Aorta (tissue), 5 donors: ENCODE measurements at regions of chr4 and their contacts with region 1.

Region 1: DNA sequence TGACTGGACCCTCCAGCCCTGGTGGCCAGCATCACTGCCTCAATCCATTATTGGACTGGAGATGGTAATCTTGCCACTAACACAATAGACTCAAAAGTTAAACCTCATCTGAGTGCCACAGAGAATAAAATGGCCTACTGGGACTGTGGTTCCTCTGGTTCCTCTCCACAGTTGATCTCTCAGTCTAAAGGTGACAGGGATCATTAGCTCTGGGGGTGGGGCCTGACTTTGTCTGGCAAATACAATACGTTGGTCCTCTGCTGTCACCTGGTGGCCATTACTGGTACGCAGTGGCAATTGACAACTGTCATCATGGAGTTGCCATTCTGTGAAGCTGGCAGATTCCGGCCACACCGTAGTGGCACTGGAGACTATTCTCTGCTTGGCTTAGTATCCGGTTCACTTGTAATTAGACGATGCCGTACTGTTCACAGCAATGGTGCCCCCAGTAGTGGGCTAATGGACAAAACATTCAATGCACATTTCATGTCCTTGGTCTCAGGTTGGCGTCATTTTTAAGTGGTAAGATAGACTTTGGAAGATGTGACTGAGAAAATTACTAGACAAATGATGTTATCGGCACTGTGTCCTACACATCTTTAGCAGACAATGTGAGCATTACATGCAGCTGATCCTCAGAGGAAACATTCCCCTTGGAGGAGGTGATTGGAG is 6.7 kb downstream of the FGFBP2 start:
- DNase-seq: peak; percentile 79 to 89
- ATAC-seq: peak; percentile 83
- H3K4me3 ChIP-seq: no peak overlapping the region
- H3K27ac ChIP-seq: no peak overlapping the region
- H3K4me1 ChIP-seq: no peaks in the 10 kb centered on the region
- H3K27me3 ChIP-seq: no peaks in the 10 kb centered on the region

Region 2: DNA sequence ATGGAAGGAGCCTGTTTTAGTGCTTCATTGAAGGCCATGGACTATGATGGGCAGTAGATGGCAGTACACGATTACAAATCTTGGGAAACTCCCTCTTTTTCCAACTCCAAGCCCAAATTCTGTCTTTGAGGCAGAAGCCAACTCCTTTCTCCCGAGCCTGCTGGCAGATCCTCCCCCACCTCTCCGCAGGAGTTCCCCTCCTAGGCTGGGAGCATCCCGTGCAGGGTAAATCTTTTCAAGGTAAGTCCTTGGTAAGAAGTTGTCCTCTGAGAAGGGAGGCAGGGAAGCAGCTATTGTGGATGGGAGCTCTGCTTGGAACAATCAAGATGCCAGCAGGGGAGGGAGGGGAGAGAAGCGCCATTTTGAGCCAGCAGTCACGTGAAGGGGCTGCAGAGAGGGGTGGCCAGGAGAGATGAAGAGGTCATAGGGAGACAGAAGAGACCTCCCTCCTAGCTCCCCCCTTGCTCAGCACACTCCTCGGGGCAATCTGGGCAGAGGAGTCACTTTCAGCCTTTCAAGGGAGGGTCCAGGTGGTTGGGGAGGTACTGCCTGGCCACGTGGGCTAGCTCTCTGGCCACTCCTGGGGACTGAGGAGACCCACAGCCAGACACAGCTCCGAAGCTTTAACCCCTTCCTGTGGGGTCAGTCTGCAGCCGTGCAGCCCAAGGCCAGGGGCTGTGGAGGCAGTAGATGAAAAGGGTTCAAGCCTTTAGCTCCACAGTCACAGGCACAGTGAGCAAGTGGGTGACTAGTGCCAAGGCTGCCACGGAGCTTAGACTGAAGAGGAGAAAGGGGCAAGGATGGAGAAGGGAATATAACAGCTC is 477.0 kb before region 1 on chr4:
- intact Hi-C with region 1: loop called in 1 of 2 experiments (anchors 5 kb)
- DNase-seq: peak in 1 of 2 donors; percentile 64
- ATAC-seq: peak; percentile 89
- H3K4me3 ChIP-seq: peak overlapping the region; percentile 12 to 73
- H3K27ac ChIP-seq: peak overlapping the region in 1 of 2 donors; percentile 20
- H3K4me1 ChIP-seq: no peaks in the 10 kb centered on the region
- H3K27me3 ChIP-seq: no peaks in the 10 kb centered on the region

Region 3: GRCh38 chr4:15729910-15730533 is 226.3 kb before region 1 on chr4:
- intact Hi-C with region 1: loop called in 1 of 2 experiments (anchors 5 kb)
- DNase-seq: no peak
- ATAC-seq: no peak
- H3K4me3 ChIP-seq: no peak overlapping the region
- H3K27ac ChIP-seq: no peak overlapping the region
- H3K4me1 ChIP-seq: no peaks in the 10 kb centered on the region
- H3K27me3 ChIP-seq: no peaks in the 10 kb centered on the region

Region 4: GRCh38 chr4:15744016-15744545 is 212.2 kb before region 1 on chr4:
- intact Hi-C with region 1: loop called in 1 of 2 experiments (anchors 10 kb)
- DNase-seq: no peak
- ATAC-seq: no peak
- H3K4me3 ChIP-seq: no peak overlapping the region
- H3K27ac ChIP-seq: no peak overlapping the region
- H3K4me1 ChIP-seq: no peaks in the 10 kb centered on the region
- H3K27me3 ChIP-seq: no peaks in the 10 kb centered on the region

Region 5: GRCh38 chr4:15805583-15806517 is 150.5 kb before region 1 on chr4:
- intact Hi-C with region 1: loop called (anchors 2 kb)
- DNase-seq: no peak
- ATAC-seq: peak; percentile 66
- H3K4me3 ChIP-seq: no peak overlapping the region
- H3K27ac ChIP-seq: no peak overlapping the region
- H3K4me1 ChIP-seq: no peaks in the 10 kb centered on the region
- H3K27me3 ChIP-seq: no peaks in the 10 kb centered on the region

Region 6: DNA sequence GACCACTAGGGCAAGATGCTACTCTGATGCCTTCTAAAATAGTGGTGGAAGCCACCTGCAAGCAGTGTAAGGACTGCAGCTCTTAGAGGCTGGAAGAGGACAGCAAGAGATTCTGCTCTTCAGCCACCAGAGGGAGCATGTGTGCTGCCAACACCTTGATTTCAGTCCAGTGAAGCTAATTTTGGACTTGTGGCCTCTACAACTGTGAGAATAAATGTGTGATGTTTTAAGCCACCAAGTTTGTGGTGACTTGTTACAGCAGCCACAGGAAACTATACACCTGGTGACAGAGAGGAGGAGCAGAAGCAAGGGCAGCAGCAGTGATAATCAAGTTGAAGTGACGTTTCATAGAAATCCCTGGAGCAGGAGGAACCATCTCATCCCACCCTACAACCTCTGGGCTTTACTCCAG is 73.6 kb before region 1 on chr4:
- intact Hi-C with region 1: loop called (anchors 1 kb)
- DNase-seq: peak in 1 of 2 donors; percentile 53
- ATAC-seq: peak; percentile 88
- H3K4me3 ChIP-seq: no peak overlapping the region
- H3K27ac ChIP-seq: no peak overlapping the region
- H3K4me1 ChIP-seq: no peaks in the 10 kb centered on the region
- H3K27me3 ChIP-seq: no peaks in the 10 kb centered on the region